ENCODE measurements at regions of chr2 and their contacts with region 1.

Region 1: DNA sequence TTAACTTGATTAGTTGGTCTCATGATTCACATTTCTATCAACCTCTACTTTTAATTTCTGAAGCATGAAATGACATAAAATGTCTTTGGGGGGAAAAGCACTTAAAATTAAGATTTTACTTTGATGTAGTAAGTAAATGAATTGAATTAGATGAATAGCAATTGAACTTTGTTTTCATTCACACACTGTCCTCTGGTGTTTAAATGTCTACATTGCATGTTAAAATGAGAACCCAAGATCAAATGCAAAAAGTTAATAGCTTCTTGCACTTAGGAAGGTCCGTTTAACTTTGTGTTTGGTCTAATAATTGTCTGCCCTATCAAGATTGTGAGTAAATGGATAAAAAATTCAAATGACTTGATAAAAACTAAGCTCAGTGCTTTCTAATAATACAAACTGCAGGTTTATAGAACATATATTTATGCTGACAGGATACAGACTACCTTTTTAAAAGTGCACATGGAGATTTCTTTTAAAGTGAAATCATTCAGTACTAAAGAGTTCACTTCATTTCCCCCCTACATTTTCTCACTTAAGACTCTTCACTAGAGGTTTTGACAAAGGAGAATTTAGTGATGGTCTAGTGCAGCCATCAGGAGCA is 156.2 kb upstream of the NABP1 start:
- DNase-seq: no peak
- ATAC-seq: 0 out of 3 replicates have a peak, but pooled peaks have one; percentile 31
- H3K4me3 ChIP-seq: no peak overlapping the region
- H3K27ac ChIP-seq: no peak overlapping the region
- H3K4me1 ChIP-seq: no peaks in the 10 kb centered on the region
- H3K27me3 ChIP-seq: no peaks in the 10 kb centered on the region; a peak in 2 of 4 replicates
- CTCF ChIP-seq: peak; percentile 51 to 66 (median 61)
- EP300 ChIP-seq: no peak
- POLR2A ChIP-seq: no peak
- RAD21 ChIP-seq: peak; percentile 69

Region 2: GRCh38 chr2:191171708-191172355 is 349.9 kb before region 1 on chr2:
- CTCF ChIA-PET with region 1: interaction called, 9 read pairs
- POLR2A ChIA-PET with region 1: no interaction called
- RAD21 ChIA-PET with region 1: interaction called, 12 read pairs
- SMC1A ChIA-PET with region 1: interaction called, 7 read pairs
- in situ Hi-C with region 1: loop called (anchors 5 kb)
- intact Hi-C with region 1: no loop called
- DNase-seq: no peak
- ATAC-seq: no peak
- H3K4me3 ChIP-seq: no peak overlapping the region
- H3K27ac ChIP-seq: no peak overlapping the region
- H3K4me1 ChIP-seq: peaks cover 11% of the 10 kb centered on the region; the same call in 1 of the 2 replicates
- H3K27me3 ChIP-seq: no peaks in the 10 kb centered on the region
- CTCF ChIP-seq: no peak
- EP300 ChIP-seq: no peak
- POLR2A ChIP-seq: no peak
- RAD21 ChIP-seq: no peak

Region 3: GRCh38 chr2:191552066-191552465 is 30.4 kb after region 1 on chr2:
- CTCF ChIA-PET with region 1: no interaction called
- POLR2A ChIA-PET with region 1: no interaction called
- RAD21 ChIA-PET with region 1: no interaction called
- SMC1A ChIA-PET with region 1: no interaction called
- in situ Hi-C with region 1: no loop called
- intact Hi-C with region 1: no loop called
- DNase-seq: no peak
- ATAC-seq: no peak
- H3K4me3 ChIP-seq: no peak overlapping the region
- H3K27ac ChIP-seq: no peak overlapping the region
- H3K4me1 ChIP-seq: no peaks in the 10 kb centered on the region
- H3K27me3 ChIP-seq: no peaks in the 10 kb centered on the region; a peak in 1 of 4 replicates
- CTCF ChIP-seq: no peak
- EP300 ChIP-seq: no peak
- POLR2A ChIP-seq: no peak
- RAD21 ChIP-seq: no peak